Heart right ventricle (tissue), 16 donors: ENCODE measurements at regions of chr2 and their contacts with region 1.

Region 1: GRCh38 chr2:6917071-6917760 is at the start of gene RNF144A:
- DNase-seq: peak; percentile 36 to 76
- ATAC-seq: peak; percentile 53 to 92 (median 76)
- H3K4me3 ChIP-seq: peak within 1 kb of the TSS; percentile 69 to 95 (median 81)
- H3K27ac ChIP-seq: peak within 1 kb of the TSS; percentile 65 to 90 (median 85)
- H3K4me1 ChIP-seq: peaks cover 7 to 48% (median 39%) of the 10 kb centered on the region in 9 donors
- H3K27me3 ChIP-seq: no peaks in the 10 kb centered on the region
- CTCF ChIP-seq: peak; percentile 32 to 67 (median 55)
- total RNA-seq, gene RNF144A: 9.2 to 19.7 (median 11.9) TPM

Region 2: DNA sequence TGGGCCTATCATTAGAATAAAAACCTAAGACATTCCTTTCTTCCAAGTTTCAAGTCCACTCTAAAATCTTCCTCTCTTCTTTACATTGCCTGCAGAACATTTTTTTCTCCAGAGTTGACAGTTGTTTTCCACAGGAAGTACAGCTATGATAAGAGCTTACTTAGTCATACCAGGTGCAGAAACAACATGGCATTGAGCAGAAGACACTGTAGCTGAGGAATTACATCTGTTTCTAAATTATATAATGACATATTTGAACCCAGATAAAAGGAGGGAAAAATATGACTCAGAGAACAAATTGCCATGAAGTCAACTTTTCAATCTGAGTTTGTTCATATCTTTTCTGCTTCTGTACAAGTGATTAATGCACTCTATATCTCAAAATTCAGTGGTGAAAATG is 81.7 kb before region 1 on chr2:
- intact Hi-C with region 1: no loop called
- DNase-seq: no peak
- ATAC-seq: no peak
- H3K4me3 ChIP-seq: no peak overlapping the region
- H3K27ac ChIP-seq: no peak overlapping the region
- H3K4me1 ChIP-seq: no peaks in the 10 kb centered on the region
- H3K27me3 ChIP-seq: no peaks in the 10 kb centered on the region
- CTCF ChIP-seq: no peak

Region 3: DNA sequence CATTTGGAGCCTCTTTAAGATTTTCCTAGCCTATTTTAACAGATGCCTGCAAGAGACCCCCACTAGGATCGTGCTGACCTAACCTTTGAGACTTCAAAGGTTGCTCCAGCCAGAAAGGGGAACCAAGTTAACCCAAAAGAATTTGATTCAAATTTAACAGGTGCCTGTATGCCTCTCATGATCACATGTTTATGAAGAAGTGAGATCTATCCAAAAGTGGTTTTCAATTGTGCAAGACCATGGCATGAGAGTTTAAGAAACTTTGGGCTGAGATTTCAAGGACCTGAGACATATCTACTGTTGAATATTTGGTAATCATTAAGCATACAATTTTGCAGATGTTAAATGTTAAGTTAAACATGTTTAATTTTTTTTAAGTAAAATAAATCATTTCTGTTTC is 40.9 kb before region 1 on chr2:
- intact Hi-C with region 1: loop called in 1 of 10 experiments (anchors 1 kb)
- DNase-seq: no peak
- ATAC-seq: no peak
- H3K4me3 ChIP-seq: no peak overlapping the region
- H3K27ac ChIP-seq: no peak overlapping the region
- H3K4me1 ChIP-seq: peaks cover 0 to 51% (median 13%) of the 10 kb centered on the region in 9 donors
- H3K27me3 ChIP-seq: no peaks in the 10 kb centered on the region
- CTCF ChIP-seq: no peak

Region 4: GRCh38 chr2:6887751-6888192 is 29.4 kb before region 1 on chr2:
- intact Hi-C with region 1: no loop called
- DNase-seq: no peak
- ATAC-seq: no peak
- H3K4me3 ChIP-seq: no peak overlapping the region
- H3K27ac ChIP-seq: no peak overlapping the region
- H3K4me1 ChIP-seq: peaks cover 0 to 18% (median 15%) of the 10 kb centered on the region in 9 donors
- H3K27me3 ChIP-seq: no peaks in the 10 kb centered on the region
- CTCF ChIP-seq: no peak

Region 5: GRCh38 chr2:7007846-7008741 is 90.9 kb after region 1 on chr2:
- intact Hi-C with region 1: loop called in 6 of 10 experiments (anchors 1 to 5 kb)
- DNase-seq: peak; percentile 93 to 94
- ATAC-seq: peak; percentile 82 to 90 (median 84)
- H3K4me3 ChIP-seq: peak overlapping the region in 7 of 10 donors; percentile 1 to 26 (median 17)
- H3K27ac ChIP-seq: peak overlapping the region; percentile 67 to 89 (median 82)
- H3K4me1 ChIP-seq: peaks cover 29 to 89% (median 68%) of the 10 kb centered on the region in 9 donors
- H3K27me3 ChIP-seq: no peaks in the 10 kb centered on the region
- CTCF ChIP-seq: peak; percentile 15 to 65 (median 45)

Region 6: DNA sequence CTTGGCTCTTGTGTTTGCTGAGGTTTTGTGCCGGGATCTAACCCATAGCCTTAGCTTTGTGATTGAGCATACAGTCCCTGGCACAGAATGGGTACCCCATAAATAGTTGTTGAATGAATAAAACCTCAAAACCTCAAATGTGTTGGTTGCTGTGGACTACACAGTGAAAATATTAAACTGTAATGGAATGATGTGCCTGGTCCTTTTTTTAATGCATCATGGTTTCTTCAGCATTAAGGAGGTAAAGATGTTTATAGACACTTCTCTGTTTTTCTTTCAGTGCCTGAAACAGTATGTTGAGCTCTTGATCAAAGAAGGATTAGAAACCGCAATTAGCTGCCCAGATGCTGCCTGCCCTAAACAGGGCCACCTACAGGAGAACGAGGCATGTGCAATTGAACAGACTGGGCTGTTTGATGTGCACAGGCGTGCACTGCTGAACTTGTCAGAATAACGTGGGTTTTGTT is 97.0 kb after region 1 on chr2:
- intact Hi-C with region 1: loop called in 5 of 10 experiments (anchors 2 to 5 kb)
- DNase-seq: no peak
- ATAC-seq: no peak
- H3K4me3 ChIP-seq: no peak overlapping the region
- H3K27ac ChIP-seq: peak overlapping the region in 3 of 10 donors; percentile 0 to 71 (median 28)
- H3K4me1 ChIP-seq: peaks cover 23 to 99% (median 87%) of the 10 kb centered on the region in 9 donors
- H3K27me3 ChIP-seq: no peaks in the 10 kb centered on the region
- CTCF ChIP-seq: peak in 7 of 9 donors; percentile 30 to 57 (median 39)

Region 7: GRCh38 chr2:7026742-7027141 is 109.5 kb after region 1 on chr2:
- intact Hi-C with region 1: loop called in 5 of 10 experiments (anchors 5 kb)
- DNase-seq: peak in 1 of 2 donors; percentile 63
- ATAC-seq: peak; percentile 25 to 78 (median 58)
- H3K4me3 ChIP-seq: no peak overlapping the region
- H3K27ac ChIP-seq: peak overlapping the region in 9 of 10 donors; percentile 56 to 87 (median 75)
- H3K4me1 ChIP-seq: peaks cover 21 to 86% (median 62%) of the 10 kb centered on the region in 9 donors
- H3K27me3 ChIP-seq: no peaks in the 10 kb centered on the region
- CTCF ChIP-seq: no peak

Region 8: DNA sequence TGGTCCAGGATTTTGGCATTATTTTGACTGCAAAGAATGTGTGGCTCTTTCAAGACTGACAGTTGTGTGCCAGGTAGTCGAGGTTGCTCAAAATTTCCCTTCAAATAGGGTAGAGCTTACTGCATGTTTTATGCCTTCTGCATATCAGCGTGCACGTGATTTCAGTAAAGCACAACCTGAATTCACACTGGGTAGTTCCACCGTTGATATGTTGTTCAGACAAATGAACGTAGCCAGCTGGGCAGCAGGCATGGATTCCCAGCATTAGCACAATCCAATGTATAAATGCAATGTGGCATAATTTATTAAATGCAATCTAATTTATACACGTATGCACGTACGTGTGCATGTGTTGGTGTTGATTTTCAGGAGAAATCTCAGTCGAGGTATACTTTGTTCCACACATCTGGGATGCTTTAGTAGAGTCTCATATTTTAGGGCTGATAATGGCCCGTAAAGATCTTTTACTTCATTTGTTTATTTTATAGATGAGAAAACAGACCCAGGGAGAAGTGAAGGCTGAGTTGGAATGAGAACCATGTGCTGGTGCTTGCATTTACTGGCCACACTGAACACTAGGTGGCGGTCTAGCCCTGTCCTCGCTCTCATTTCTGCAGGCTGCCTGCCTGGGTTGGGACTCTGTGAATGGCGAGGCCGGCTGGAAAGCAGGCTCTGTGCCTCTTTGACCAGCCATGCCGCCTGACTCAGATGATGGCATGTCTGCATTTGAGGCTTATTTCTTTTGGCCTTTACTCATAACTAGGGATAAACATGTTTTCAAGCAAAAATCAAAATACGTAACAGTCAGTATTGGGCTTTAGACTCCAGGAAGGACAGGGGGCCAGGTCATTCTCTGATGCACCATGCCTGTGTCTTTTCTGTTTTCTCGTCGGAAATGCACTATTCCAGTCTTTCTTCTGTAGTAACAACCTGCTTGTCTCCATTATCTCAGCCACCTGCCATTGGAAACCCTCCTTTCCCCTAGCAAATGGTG is 120.4 kb after region 1 on chr2:
- intact Hi-C with region 1: loop called in 5 of 10 experiments (anchors 5 kb)
- DNase-seq: no peak
- ATAC-seq: peak in 7 of 8 donors; percentile 46 to 77 (median 62)
- H3K4me3 ChIP-seq: no peak overlapping the region
- H3K27ac ChIP-seq: no peak overlapping the region
- H3K4me1 ChIP-seq: peaks cover 0 to 15% (median 4%) of the 10 kb centered on the region in 9 donors
- H3K27me3 ChIP-seq: no peaks in the 10 kb centered on the region
- CTCF ChIP-seq: peak; percentile 46 to 80 (median 65)

Region 9: DNA sequence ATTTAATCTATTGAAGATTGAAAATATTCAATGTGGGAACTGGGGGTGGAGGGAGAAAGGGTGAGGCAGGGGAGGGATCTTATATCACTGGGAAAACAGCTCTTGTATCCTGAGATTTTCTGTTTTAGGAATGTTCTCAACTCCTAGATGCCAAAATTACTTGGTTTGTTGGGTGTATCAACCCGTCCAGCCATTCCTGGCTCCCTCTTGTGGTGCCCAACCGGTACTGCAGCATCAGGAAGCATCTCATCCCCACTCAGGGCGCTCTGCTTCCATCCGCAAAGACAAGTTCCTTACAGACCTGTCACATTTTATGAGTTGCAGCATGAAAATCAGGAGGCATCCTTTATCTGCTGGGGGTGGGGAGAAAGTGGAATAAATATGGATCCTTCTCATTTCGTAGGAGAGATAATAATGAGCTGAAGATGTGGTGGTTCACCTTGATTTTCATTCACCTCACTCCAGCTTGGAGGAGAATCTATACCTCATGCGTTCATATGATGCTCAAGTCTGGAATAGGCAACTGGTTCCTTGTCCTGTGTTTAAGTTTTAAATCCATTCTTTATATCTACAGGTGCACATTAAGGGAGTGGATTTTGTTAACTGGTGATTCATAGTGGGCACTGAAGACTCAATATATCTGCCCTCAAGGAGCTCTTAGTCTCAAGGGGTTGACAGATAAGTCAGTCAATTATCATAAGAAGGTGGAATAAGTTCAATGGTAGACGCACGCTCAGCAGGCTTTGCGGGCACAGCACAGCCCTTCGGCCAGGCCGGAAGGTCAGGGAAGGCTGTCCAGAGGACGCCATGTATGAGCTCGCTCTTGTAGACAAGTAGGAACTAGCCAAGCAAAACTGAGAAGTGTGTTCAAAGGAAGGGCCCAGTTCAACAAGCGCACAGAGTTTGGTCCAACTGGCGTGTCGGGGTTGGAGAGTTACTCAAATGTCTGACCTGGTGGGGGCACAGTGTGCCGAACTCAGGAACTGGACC is 127.3 kb after region 1 on chr2:
- intact Hi-C with region 1: loop called in 6 of 10 experiments (anchors 5 kb)
- DNase-seq: peak; percentile 68 to 69
- ATAC-seq: peak in 7 of 8 donors; percentile 53 to 88 (median 80)
- H3K4me3 ChIP-seq: no peak overlapping the region
- H3K27ac ChIP-seq: no peak overlapping the region
- H3K4me1 ChIP-seq: peaks cover 0 to 14% (median 8%) of the 10 kb centered on the region in 9 donors
- H3K27me3 ChIP-seq: no peaks in the 10 kb centered on the region
- CTCF ChIP-seq: peak; percentile 95 to 98 (median 96)

Region 10: GRCh38 chr2:7057865-7058400 is 140.7 kb after region 1 on chr2:
- intact Hi-C with region 1: no loop called
- DNase-seq: no peak
- ATAC-seq: peak in 2 of 8 donors; percentile 38 to 43
- H3K4me3 ChIP-seq: no peak overlapping the region
- H3K27ac ChIP-seq: peak overlapping the region in 1 of 10 donors; percentile 27
- H3K4me1 ChIP-seq: peaks cover 0 to 34% (median 0%) of the 10 kb centered on the region in 9 donors
- H3K27me3 ChIP-seq: no peaks in the 10 kb centered on the region
- CTCF ChIP-seq: no peak